ENCODE measurements at regions of chr9 and their contacts with region 1.

Region 1: DNA sequence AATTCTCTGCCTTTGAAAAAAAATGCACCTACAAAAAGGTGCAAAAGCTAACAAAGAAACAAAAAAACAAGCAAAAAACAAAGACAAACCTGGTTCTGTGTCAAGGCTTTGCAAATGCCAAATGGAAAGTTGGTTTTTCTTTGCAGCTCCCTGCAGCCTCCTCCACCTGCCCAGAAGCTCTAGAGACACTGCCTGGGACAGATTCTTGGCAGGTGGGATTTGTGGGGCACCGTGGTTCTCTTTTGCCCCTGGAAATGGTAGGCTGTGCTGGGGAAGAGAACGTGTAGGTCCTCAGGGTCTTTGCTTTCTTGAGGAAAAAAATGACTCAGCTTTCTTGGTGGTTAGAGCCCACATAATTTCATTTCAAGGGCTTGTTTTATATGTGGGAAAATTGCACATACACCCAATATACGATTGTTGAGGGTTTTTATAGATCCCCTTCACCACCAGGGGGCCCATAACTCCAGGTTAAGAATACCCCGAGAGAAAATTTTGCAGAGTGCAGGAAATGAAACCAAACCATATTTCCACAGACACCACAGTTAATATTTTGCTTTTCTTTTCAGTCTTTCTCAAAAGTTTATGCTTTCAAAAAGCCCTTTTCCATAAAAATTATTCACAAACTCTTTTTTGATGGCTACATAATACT is 58.7 kb downstream of the NXNL2 start:
- DNase-seq: peak; percentile 39
- H3K4me3 ChIP-seq: no peak overlapping the region
- H3K27ac ChIP-seq: no peak overlapping the region
- H3K4me1 ChIP-seq: no peaks in the 10 kb centered on the region
- H3K27me3 ChIP-seq: peaks cover 0 to 5% of the 10 kb centered on the region in 2 experiments
- CTCF ChIP-seq: peak; percentile 51 to 57
- POLR2A ChIP-seq: no peak

Region 2: GRCh38 chr9:88651682-88652633 is 58.3 kb after region 1 on chr9:
- CTCF ChIA-PET with region 1: no interaction called
- POLR2A ChIA-PET with region 1: no interaction called
- dilution Hi-C with region 1: no loop called
- intact Hi-C with region 1: no loop called
- DNase-seq: no peak
- H3K4me3 ChIP-seq: no peak overlapping the region
- H3K27ac ChIP-seq: no peak overlapping the region
- H3K4me1 ChIP-seq: no peaks in the 10 kb centered on the region
- H3K27me3 ChIP-seq: no peaks in the 10 kb centered on the region
- CTCF ChIP-seq: no peak
- POLR2A ChIP-seq: no peak

Region 3: DNA sequence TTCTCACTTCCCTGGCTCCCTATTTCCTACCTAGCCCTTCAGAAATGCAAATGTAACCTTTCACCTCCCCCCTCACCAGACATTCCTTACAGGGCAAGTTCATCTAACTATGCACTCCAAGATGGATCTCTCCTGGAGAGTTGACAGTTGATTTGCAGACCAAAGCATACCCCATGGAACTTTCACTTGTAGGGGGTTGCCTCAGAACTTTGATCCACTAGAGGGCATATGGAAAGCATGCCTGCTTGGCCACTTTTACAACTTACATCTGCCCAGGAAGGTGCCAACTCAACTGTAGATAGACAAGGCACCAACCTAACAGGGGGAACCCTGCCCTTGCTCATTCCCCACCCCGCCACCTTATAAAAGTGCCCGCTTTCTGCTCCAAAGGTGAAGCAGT is 129.1 kb after region 1 on chr9:
- CTCF ChIA-PET with region 1: no interaction called
- POLR2A ChIA-PET with region 1: no interaction called
- dilution Hi-C with region 1: no loop called
- intact Hi-C with region 1: loop called (anchors 5 kb)
- DNase-seq: peak; percentile 69
- H3K4me3 ChIP-seq: no peak overlapping the region
- H3K27ac ChIP-seq: no peak overlapping the region
- H3K4me1 ChIP-seq: peaks cover 3% of the 10 kb centered on the region
- H3K27me3 ChIP-seq: no peaks in the 10 kb centered on the region
- CTCF ChIP-seq: peak; percentile 40 to 56
- POLR2A ChIP-seq: no peak

Region 4: GRCh38 chr9:88741335-88741734 is 147.7 kb after region 1 on chr9:
- CTCF ChIA-PET with region 1: no interaction called
- POLR2A ChIA-PET with region 1: no interaction called
- dilution Hi-C with region 1: no loop called
- intact Hi-C with region 1: loop called (anchors 1 kb)
- DNase-seq: no peak
- H3K4me3 ChIP-seq: no peak overlapping the region
- H3K27ac ChIP-seq: no peak overlapping the region
- H3K4me1 ChIP-seq: peaks cover 2% of the 10 kb centered on the region
- H3K27me3 ChIP-seq: no peaks in the 10 kb centered on the region
- CTCF ChIP-seq: peak; percentile 27 to 46
- POLR2A ChIP-seq: no peak

Measured in endothelial cell of umbilical vein (primary cell).